Activated CD4-positive, alpha-beta T cell treated with anti-CD3 and anti-CD28 coated beads for 36 hours (primary cell): ENCODE measurements at regions of chr7 and their contacts with region 1.

Region 1: GRCh38 chr7:19830604-19831003 is 57.2 kb upstream of the TMEM196 start:
- DNase-seq: no peak
- ATAC-seq: no peak
- H3K4me3 Mint-ChIP-seq: no peak overlapping the region
- H3K27ac Mint-ChIP-seq: no peak overlapping the region
- H3K4me1 Mint-ChIP-seq: no peaks in the 10 kb centered on the region
- H3K27me3 Mint-ChIP-seq: no peaks in the 10 kb centered on the region

Region 2: DNA sequence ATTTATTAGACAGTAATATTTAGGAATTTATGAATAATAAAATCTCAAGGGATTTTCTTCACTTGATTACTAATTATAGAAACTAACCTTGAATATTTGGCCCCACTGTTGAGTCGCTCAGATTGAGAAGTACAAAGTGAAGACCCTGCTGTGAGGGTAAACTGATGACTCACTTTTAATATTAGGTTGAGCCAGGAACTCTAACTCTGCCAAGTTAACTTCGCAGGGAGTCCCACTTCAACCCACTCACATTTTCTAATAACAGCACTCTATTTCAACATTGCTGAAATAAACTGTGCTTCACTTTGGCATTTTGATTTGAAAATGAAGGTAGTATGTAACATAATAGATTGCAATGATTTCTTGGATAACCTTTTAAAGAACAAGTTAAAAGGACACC is 322.5 kb before region 1 on chr7:
- CTCF ChIA-PET with region 1: no interaction called
- POLR2A ChIA-PET with region 1: no interaction called
- intact Hi-C with region 1: no loop called
- DNase-seq: no peak
- ATAC-seq: no peak
- H3K4me3 Mint-ChIP-seq: no peak overlapping the region
- H3K27ac Mint-ChIP-seq: no peak overlapping the region
- H3K4me1 Mint-ChIP-seq: no peaks in the 10 kb centered on the region
- H3K27me3 Mint-ChIP-seq: no peaks in the 10 kb centered on the region

Region 3: DNA sequence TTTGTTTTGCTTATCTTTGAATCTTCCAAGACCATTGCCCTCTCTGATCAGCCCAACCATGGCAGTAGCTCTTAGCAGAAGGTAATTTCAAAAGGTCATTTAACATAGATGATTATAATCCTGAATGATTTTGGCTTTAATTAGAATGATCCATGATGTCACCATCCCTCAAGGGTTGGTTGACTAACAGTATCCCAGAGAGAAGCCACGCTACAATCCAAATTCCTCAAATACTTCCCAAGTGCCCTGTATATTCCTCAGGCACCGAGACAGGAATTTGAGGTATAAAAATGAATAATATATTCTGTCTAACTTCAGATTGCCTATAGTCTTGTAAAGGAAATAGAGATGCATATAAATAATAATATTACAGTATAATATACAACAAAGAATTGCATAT is 15.1 kb before region 1 on chr7:
- CTCF ChIA-PET with region 1: no interaction called
- POLR2A ChIA-PET with region 1: no interaction called
- intact Hi-C with region 1: loop called in 1 of 2 experiments (anchors 1 kb)
- DNase-seq: no peak
- ATAC-seq: no peak
- H3K4me3 Mint-ChIP-seq: no peak overlapping the region
- H3K27ac Mint-ChIP-seq: no peak overlapping the region
- H3K4me1 Mint-ChIP-seq: no peaks in the 10 kb centered on the region
- H3K27me3 Mint-ChIP-seq: no peaks in the 10 kb centered on the region